HAP-1 (cell line): ENCODE measurements at regions of chr14 and their contacts with region 1.

Region 1: DNA sequence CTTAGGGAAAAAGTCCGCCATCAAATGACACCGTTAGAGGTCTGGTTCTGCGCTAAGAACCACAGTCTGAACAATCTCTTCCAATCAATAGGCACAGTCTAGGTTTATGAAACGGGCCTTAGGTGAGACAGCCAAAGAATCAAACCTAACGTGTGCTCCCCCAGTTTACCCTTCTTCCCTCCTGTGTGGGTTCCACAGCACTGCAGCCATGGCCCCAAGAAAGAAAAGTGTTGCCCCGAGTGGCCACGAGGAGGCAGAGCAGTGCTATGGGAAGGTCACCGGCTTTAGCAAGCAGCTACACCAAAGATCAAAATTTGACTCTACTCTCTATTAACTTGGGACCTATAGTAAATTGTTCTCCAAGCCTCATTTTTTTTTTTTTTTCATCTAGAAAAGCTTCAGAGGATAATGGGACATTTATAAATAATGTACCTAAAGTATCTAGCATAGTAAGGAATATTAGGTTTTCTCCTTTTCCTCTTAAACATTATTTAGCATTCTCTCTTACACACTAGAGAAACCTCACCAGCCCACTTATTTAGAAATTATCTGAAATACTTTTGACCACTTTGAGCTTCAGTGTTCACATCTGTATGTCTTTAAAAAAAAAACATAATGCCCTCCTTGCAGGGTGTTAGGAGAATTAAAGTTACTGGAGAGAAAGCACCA is 70.2 kb upstream of the GPHB5 start:
- DNase-seq: peak; percentile 26 to 74
- H3K4me3 ChIP-seq: no peak overlapping the region
- H3K4me1 ChIP-seq: 0 out of 2 replicates have a peak, but pooled peaks cover 3% of the 10 kb centered on the region
- H3K27me3 ChIP-seq: no peaks in the 10 kb centered on the region

Region 2: GRCh38 chr14:63770187-63770807 is 381.4 kb after region 1 on chr14:
- in situ Hi-C with region 1: loop called (anchors 25 kb)
- DNase-seq: peak; percentile 58 to 65
- H3K4me3 ChIP-seq: no peak overlapping the region
- H3K4me1 ChIP-seq: no peaks in the 10 kb centered on the region; the same call in 1 of the 2 replicates
- H3K27me3 ChIP-seq: 0 out of 2 replicates have a peak, but pooled peaks cover 2% of the 10 kb centered on the region

Region 3: DNA sequence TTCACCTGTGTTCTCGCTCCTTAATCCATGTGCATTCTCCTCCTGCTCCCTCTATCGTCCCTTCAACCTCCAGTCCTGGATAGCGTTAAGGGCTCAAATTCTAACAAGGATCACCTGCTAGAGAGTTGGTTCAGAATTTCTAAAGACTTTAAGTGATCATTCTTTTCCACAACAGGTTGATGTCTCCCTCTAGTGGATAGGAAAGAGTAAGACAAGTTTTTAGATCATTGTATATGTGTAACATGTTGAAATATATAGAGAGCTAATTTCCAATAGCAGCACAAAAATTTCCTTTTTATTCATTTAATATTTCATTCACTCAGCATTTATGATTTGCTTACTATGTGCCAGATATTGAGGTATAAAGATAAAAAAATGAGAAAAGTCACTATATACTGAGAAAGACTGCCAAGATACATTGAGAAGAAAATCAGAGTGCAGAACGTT is 914.6 kb after region 1 on chr14:
- in situ Hi-C with region 1: loop called (anchors 25 kb)
- DNase-seq: peak; percentile 26 to 87
- H3K4me3 ChIP-seq: no peak overlapping the region
- H3K4me1 ChIP-seq: no peaks in the 10 kb centered on the region
- H3K27me3 ChIP-seq: no peaks in the 10 kb centered on the region